Right ventricle myocardium inferior (tissue), 1 donor: ENCODE measurements at regions of chr3 and their contacts with region 1.

Region 1: GRCh38 chr3:43378066-43378935 is 92.0 kb downstream of the SNRK start:
- DNase-seq: no peak
- ATAC-seq: no peak

Region 2: GRCh38 chr3:42961633-42962032 is 416.7 kb before region 1 on chr3:
- intact Hi-C with region 1: loop called (anchors 10 kb)
- DNase-seq: no peak
- ATAC-seq: peak; percentile 71

Region 3: DNA sequence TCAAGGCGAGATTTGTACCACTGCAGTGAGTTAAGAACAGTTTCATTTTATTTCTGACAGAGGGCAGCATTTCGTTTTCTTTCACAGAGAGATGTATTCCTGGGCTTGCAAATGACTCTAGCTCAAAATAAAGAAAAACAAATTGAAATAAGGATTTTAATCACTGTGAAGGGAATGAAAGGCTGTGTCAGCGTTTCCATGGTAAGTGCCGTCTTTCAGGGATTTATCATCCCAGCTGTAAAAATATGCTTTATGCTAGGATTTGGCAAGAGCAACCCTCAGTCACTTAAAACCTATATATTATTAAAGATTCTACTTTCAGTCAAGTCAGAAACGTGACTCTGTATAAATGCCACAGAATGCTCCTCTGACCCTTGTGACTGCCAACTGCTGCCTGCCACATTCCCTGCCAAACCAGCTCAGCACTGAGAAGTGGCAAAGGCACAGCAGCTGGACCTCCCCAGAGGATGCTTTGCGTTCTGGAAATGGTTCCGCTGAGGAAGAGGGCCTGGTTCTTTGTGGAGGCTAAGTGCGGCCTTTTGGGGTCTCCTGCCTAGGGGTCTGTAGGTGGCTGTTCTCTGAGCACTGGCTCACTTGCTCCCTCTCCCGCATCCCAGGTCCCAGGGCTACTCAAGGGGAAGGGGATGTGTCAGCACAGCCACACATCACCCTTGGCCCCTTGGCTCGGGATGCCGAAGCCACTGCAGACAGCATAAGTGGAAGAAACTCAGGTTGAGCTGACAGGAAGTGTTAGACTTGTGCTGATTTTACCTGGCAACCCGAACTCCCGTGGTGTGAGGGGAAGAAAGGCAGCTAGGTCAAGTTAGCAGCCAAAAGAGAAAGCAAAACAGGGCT is 215.8 kb before region 1 on chr3:
- intact Hi-C with region 1: loop called (anchors 1 kb)
- DNase-seq: no peak
- ATAC-seq: no peak

Region 4: GRCh38 chr3:43317461-43318316 is 60.6 kb before region 1 on chr3:
- intact Hi-C with region 1: no loop called
- DNase-seq: no peak
- ATAC-seq: peak; percentile 68

Region 5: GRCh38 chr3:43442872-43443395 is 64.6 kb after region 1 on chr3:
- intact Hi-C with region 1: no loop called
- DNase-seq: no peak
- ATAC-seq: no peak

Region 6: DNA sequence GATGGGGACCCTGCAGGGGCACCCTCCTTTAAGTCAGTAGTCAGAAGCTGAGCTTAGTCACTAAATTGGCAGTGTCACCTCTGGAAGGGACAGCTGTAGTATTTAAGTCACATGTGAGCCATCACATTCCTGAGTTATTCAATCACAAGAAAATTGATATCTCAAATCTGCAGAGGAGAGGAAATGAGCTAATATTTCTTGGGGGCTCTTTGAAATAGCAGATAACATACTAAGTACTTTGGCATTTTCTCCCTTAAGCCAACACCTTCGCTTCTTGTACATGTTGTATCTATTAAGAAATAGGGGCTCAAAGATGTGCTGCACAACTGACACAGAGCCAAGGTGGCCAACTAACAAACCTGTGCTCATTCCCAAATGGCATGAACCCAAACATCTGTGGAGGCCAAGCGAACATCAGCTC is 375.5 kb after region 1 on chr3:
- intact Hi-C with region 1: loop called (anchors 5 kb)
- DNase-seq: no peak
- ATAC-seq: no peak